Aorta (tissue), 5 donors: ENCODE measurements at regions of chr20 and their contacts with region 1.

Region 1: DNA sequence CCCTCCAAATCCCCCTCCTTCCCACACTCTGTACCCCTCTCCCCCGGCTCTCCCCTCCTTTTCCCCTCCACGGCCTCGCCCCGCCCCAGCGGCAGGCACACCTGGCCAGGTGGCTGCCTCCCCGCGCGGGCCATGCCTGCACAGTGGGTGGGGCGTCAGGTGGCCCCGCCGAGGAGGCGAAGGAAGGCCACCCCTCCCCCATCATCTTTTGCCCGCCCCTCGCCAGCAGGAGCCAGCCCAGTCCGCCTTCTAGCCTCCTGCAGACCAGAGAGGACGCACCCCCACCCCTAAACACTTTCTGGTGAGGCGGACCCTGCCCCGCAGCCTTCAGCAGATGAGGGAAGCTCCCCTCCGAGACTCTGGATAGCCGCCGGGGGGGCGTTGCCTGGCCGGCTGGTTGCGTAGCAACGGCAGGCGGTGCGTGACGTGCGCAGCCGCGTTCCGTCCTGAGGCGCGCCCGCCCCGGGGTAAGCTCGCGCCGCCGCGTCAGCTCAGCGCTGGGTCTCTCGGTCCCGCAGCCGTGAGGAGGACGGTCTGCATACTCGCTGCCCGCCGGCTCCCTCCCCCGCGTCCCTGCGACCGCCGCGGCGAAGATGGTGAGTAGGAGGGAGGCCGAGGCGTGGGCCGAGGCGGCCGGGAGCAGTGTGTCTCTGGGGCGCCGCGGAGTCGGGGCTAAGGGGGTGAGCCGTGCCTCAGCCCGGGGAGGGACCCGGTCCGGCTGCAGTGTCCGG is at the start of gene DSTN:
- DNase-seq: peak; percentile 96 to 98
- ATAC-seq: peak; percentile 92
- H3K4me3 ChIP-seq: peak within 1 kb of the TSS; percentile 87 to 98
- H3K27ac ChIP-seq: peak within 1 kb of the TSS; percentile 96 to 97
- H3K4me1 ChIP-seq: peaks cover 0 to 3% of the 10 kb centered on the region in 2 donors
- H3K27me3 ChIP-seq: no peaks in the 10 kb centered on the region
- total RNA-seq, gene DSTN: 1,041 to 1,932 TPM

Region 2: GRCh38 chr20:17536944-17537444 is 32.8 kb before region 1 on chr20:
- intact Hi-C with region 1: loop called (anchors 1 to 2 kb)
- DNase-seq: peak; percentile 68 to 80
- ATAC-seq: peak; percentile 94
- H3K4me3 ChIP-seq: no peak overlapping the region
- H3K27ac ChIP-seq: peak overlapping the region in 1 of 2 donors; percentile 32
- H3K4me1 ChIP-seq: peaks cover 0 to 6% of the 10 kb centered on the region in 2 donors
- H3K27me3 ChIP-seq: no peaks in the 10 kb centered on the region

Region 3: DNA sequence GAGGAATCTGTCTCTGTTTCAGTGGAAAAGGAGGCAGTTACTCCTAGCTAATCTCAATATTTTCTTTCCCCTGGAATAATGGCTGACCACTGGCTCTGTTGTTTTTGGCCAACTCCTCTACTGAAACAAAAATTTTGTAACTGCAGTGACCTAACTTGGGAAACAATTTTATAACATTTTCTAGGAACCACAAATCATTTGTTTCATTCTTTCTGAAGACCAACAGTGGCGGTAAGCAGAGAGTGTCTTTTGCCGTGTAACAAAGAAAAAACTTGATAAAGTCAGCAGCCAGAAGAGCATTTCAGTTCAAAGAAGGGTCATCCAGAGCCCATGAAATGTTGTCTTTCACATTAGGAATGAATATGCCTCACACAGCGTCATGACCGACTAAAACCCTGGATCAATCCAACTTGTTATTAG is 26.8 kb before region 1 on chr20:
- intact Hi-C with region 1: loop called in 1 of 2 experiments (anchors 2 kb)
- DNase-seq: no peak
- ATAC-seq: peak; percentile 89
- H3K4me3 ChIP-seq: peak overlapping the region in 1 of 2 donors; percentile 39
- H3K27ac ChIP-seq: peak overlapping the region; percentile 85 to 98
- H3K4me1 ChIP-seq: peaks cover 3 to 6% of the 10 kb centered on the region in 2 donors
- H3K27me3 ChIP-seq: no peaks in the 10 kb centered on the region

Region 4: DNA sequence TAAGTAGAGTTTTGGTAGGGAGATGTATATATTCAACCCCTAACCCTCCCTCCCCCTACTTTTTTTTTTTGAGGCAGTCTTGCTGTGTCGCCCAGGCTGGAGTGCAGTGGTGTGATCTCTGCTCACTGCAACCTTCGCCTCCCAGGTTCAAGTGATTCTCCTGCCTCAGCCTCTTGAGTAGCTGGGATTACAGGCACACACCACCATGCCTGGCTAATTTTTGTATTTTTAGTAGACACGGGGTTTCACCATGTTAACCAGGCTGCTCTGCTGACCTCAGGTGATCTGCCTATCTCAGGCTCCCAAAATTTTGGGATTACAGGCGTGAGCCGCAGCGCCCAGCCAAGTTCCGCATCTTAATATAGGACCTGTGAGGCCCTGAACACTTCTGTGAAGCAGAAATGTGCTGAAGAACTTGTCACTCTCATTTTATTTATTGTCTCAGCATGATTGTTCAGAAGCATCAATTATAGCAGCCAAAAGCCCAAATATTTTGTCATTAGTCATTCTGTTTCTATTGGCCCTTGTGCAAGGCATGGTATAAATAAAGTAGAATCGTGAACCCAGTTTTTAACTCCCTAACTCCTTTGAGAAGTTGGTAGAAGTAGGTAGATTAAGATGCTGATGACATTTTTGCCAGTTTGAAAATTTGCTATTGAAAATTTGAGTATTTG is 19.5 kb after region 1 on chr20:
- intact Hi-C with region 1: loop called in 1 of 2 experiments (anchors 2 kb)
- DNase-seq: peak in 1 of 2 donors; percentile 51
- ATAC-seq: peak; percentile 73
- H3K4me3 ChIP-seq: peak overlapping the region; percentile 11 to 66
- H3K27ac ChIP-seq: peak overlapping the region in 1 of 2 donors; percentile 20
- H3K4me1 ChIP-seq: peaks cover 11 to 26% of the 10 kb centered on the region in 2 donors
- H3K27me3 ChIP-seq: no peaks in the 10 kb centered on the region

Region 5: GRCh38 chr20:17611540-17612286 is 41.9 kb after region 1 on chr20:
- intact Hi-C with region 1: loop called (anchors 2 to 5 kb)
- DNase-seq: peak; percentile 58 to 78
- ATAC-seq: peak; percentile 13
- H3K4me3 ChIP-seq: no peak overlapping the region
- H3K27ac ChIP-seq: peak overlapping the region; percentile 0 to 14
- H3K4me1 ChIP-seq: no peaks in the 10 kb centered on the region
- H3K27me3 ChIP-seq: no peaks in the 10 kb centered on the region

Region 6: DNA sequence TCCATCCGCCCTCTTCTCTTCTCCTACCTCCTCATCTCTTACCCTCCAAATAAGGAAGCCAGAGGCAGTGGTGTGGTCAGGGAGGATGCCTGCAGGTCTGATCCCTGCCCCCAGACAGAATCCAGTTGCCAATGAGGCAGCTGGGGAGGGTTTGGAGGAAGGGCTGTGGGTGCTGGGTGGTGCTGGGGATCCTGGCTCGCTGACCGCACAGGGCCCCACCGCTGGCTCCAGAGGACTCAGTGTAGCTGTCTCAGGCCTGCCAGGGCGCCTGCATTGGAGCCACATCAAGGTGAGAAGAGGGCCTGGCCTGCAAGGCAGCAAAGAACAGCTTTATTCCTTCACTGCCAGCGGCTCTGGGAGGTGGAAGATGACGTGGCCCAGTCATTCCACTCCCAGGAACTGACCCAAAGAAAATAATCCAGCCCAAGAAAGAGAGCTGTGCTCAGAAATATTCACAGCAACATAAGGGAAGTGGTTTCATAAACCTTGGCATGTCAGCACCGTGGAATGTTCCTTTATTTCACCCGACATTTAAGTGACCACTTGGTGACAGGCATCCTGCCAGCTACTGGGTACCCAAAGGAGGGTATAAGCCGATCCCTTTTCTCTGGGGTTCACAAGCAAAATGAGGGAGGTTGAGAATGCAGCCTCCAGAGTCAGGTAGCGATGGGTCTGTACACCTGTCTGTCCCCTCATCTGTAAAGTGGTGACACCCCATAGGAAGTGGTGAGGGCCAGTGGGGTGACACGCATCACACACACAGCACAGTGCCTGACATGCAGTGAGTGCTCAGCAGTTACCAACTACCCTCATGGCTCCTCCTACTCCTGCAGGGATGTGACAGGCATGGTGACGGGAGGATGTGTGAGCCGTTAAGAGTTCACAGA is 273.7 kb after region 1 on chr20:
- intact Hi-C with region 1: loop called in 1 of 2 experiments (anchors 10 kb)
- DNase-seq: peak; percentile 82 to 86
- ATAC-seq: peak; percentile 80
- H3K4me3 ChIP-seq: no peak overlapping the region
- H3K27ac ChIP-seq: peak overlapping the region; percentile 7 to 98
- H3K4me1 ChIP-seq: no peaks in the 10 kb centered on the region
- H3K27me3 ChIP-seq: no peaks in the 10 kb centered on the region